CD14-positive monocyte (primary cell): ENCODE measurements at regions of chr18 and their contacts with region 1.

Region 1: GRCh38 chr18:45879681-45880655 is 54.5 kb downstream of the SIGLEC15 start:
- DNase-seq: peak; percentile 44 to 60 (median 52)
- H3K4me3 ChIP-seq: no peak overlapping the region
- H3K4me3 Mint-ChIP-seq: no peak overlapping the region
- H3K27ac ChIP-seq: peak overlapping the region in 1 of 2 donors; percentile 49
- H3K27ac Mint-ChIP-seq: peak overlapping the region in 4 of 7 donors; percentile 11 to 77 (median 54)
- H3K4me1 ChIP-seq: no peaks in the 10 kb centered on the region
- H3K4me1 Mint-ChIP-seq: peaks cover 7% of the 10 kb centered on the region
- H3K27me3 ChIP-seq: no peaks in the 10 kb centered on the region
- H3K27me3 Mint-ChIP-seq: no peaks in the 10 kb centered on the region
- CTCF ChIP-seq: peak; percentile 99

Region 2: GRCh38 chr18:45430041-45430440 is 449.9 kb before region 1 on chr18:
- intact Hi-C with region 1: no loop called
- DNase-seq: no peak
- H3K4me3 ChIP-seq: no peak overlapping the region
- H3K4me3 Mint-ChIP-seq: no peak overlapping the region
- H3K27ac ChIP-seq: no peak overlapping the region
- H3K27ac Mint-ChIP-seq: no peak overlapping the region
- H3K4me1 ChIP-seq: no peaks in the 10 kb centered on the region
- H3K4me1 Mint-ChIP-seq: peaks cover 3% of the 10 kb centered on the region
- H3K27me3 ChIP-seq: no peaks in the 10 kb centered on the region
- H3K27me3 Mint-ChIP-seq: peaks cover 0 to 1% (median 0%) of the 10 kb centered on the region in 3 donors
- CTCF ChIP-seq: no peak

Region 3: DNA sequence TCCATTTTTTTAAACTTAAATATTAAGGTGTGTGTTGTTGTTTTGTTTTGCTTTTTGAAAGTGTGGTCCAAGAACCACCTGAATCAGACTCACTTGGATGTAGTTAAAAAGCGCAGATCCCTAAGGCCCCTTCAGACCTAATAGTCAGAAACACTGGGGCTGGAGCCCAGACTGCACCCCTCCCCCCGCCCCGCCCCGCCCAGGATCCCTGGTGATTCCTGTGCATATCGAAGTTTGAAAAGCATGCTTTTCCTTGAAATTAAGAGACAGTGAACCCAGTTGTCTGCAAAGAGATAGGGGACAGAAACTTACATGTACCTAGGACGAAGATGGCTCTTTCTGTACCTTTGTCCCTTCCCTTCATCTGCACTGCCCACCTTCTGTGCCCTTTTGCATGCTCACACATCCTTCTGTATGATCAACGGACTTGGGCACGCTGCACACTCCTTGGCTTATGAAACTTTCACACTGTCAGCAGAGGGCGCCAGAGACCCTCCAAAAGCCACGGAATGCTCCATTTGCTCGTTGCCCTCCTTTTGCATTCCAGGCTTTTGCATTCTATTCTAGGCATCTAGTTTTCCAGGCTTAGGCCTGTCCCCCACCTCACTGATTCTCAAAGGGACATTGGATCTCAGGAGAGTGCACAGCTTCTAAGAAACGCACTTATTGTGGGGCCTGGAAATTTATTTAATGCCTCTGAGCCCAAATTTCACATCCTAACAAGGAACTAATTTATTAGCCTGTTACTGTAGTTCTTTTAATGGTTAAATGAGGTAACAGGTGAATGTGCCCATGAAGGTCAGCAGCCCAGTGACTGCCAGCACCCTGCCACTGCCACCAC is 188.8 kb before region 1 on chr18:
- intact Hi-C with region 1: loop called in 1 of 2 experiments (anchors 5 kb)
- DNase-seq: peak; percentile 58 to 66 (median 62)
- H3K4me3 ChIP-seq: no peak overlapping the region
- H3K4me3 Mint-ChIP-seq: no peak overlapping the region
- H3K27ac ChIP-seq: no peak overlapping the region
- H3K27ac Mint-ChIP-seq: no peak overlapping the region
- H3K4me1 ChIP-seq: peaks cover 27 to 37% of the 10 kb centered on the region in 2 donors
- H3K4me1 Mint-ChIP-seq: peaks cover 37% of the 10 kb centered on the region
- H3K27me3 ChIP-seq: no peaks in the 10 kb centered on the region
- H3K27me3 Mint-ChIP-seq: peaks cover 0 to 1% (median 0%) of the 10 kb centered on the region in 3 donors
- CTCF ChIP-seq: peak; percentile 91